T-cell (primary cell): ENCODE measurements at regions of chr3 and their contacts with region 1.

Region 1: DNA sequence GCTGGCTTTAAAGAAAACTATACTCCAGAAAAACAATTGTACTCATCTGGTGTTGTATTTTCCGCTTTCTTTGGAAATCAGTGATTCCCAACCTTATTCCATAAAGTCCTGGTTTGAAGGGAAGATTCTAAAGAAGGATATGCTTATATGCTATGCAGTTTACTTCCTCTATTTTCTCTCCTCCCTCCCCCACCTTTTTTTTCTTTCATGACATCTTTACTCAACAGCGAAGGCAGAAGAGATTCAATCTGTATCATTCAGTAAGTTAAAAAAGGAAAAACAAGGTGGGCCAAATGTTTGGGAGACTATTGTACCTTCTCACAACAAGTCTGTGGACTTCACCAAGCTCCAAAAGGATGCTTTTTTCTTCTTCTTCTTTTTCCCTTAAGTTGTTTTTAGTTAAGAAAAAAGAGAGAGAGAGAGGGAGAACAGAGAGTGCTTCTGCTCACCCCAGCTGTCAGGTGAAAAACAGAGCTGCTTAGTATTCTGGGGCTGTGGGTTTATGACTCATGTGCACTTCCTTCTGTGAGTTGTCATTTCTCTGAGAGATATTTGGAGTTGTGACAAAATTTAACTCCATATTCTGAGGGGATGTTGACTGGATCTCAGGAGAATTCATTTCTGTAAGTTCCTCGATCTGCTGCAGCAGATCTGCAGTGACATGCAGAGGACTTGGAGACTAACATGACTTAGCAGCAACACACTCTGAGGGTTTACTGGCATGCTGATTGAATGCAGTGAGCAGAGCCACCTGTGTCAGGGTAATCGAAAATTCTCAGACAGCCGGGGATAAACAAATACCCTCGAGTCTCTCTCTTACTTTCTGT is 70.7 kb downstream of the SSR3 start:
- DNase-seq: peak in 34 of 35 experiments; percentile 1 to 72 (median 38)
- ATAC-seq: peak; percentile 89 to 95 (median 90)
- H3K4me3 ChIP-seq: peak overlapping the region in 1 of 2 donors; percentile 24
- H3K4me3 Mint-ChIP-seq: peak overlapping the region; percentile 54 to 76 (median 74)
- H3K27ac ChIP-seq: peak overlapping the region; percentile 91
- H3K27ac Mint-ChIP-seq: peak overlapping the region; percentile 84 to 92
- H3K4me1 ChIP-seq: peaks cover 8 to 17% of the 10 kb centered on the region in 2 experiments
- H3K4me1 Mint-ChIP-seq: peaks cover 37 to 48% (median 47%) of the 10 kb centered on the region in 3 donors
- H3K27me3 ChIP-seq: no peaks in the 10 kb centered on the region
- H3K27me3 Mint-ChIP-seq: peaks cover 0 to 1% of the 10 kb centered on the region in 2 donors

Region 2: GRCh38 chr3:156518726-156519125 is 34.6 kb after region 1 on chr3:
- CTCF ChIA-PET with region 1: no interaction called
- POLR2A ChIA-PET with region 1: no interaction called
- DNase-seq: no peak
- ATAC-seq: no peak
- H3K4me3 ChIP-seq: no peak overlapping the region
- H3K4me3 Mint-ChIP-seq: no peak overlapping the region
- H3K27ac ChIP-seq: no peak overlapping the region
- H3K27ac Mint-ChIP-seq: no peak overlapping the region
- H3K4me1 ChIP-seq: no peaks in the 10 kb centered on the region
- H3K4me1 Mint-ChIP-seq: peaks cover 2 to 6% (median 4%) of the 10 kb centered on the region in 3 donors
- H3K27me3 ChIP-seq: peaks cover 0 to 7% of the 10 kb centered on the region in 2 experiments
- H3K27me3 Mint-ChIP-seq: peaks cover 12 to 25% of the 10 kb centered on the region in 2 donors

Region 3: GRCh38 chr3:156632601-156633000 is 148.4 kb after region 1 on chr3:
- CTCF ChIA-PET with region 1: no interaction called
- POLR2A ChIA-PET with region 1: interaction called in 1 of 2 experiments, 10 read pairs
- DNase-seq: no peak
- ATAC-seq: no peak
- H3K4me3 ChIP-seq: no peak overlapping the region
- H3K4me3 Mint-ChIP-seq: no peak overlapping the region
- H3K27ac ChIP-seq: no peak overlapping the region
- H3K27ac Mint-ChIP-seq: no peak overlapping the region
- H3K4me1 ChIP-seq: no peaks in the 10 kb centered on the region
- H3K4me1 Mint-ChIP-seq: no peaks in the 10 kb centered on the region
- H3K27me3 ChIP-seq: no peaks in the 10 kb centered on the region
- H3K27me3 Mint-ChIP-seq: no peaks in the 10 kb centered on the region

Region 4: GRCh38 chr3:156691920-156692319 is 207.7 kb after region 1 on chr3:
- CTCF ChIA-PET with region 1: no interaction called
- POLR2A ChIA-PET with region 1: no interaction called
- DNase-seq: no peak
- ATAC-seq: no peak
- H3K4me3 ChIP-seq: no peak overlapping the region
- H3K4me3 Mint-ChIP-seq: no peak overlapping the region
- H3K27ac ChIP-seq: no peak overlapping the region
- H3K27ac Mint-ChIP-seq: no peak overlapping the region
- H3K4me1 ChIP-seq: peaks cover 2 to 6% of the 10 kb centered on the region in 2 experiments
- H3K4me1 Mint-ChIP-seq: peaks cover 39 to 59% (median 58%) of the 10 kb centered on the region in 3 donors
- H3K27me3 ChIP-seq: no peaks in the 10 kb centered on the region
- H3K27me3 Mint-ChIP-seq: no peaks in the 10 kb centered on the region